ENCODE measurements at regions of chr5 and their contacts with region 1.

Region 1: GRCh38 chr5:35852084-35852734 is 4.5 kb upstream of the IL7R start:
- DNase-seq: peak in 5 of 9 experiments; percentile 30 to 83 (median 42)
- ATAC-seq: no peak
- H3K4me3 ChIP-seq: peak overlapping the region; percentile 32 to 47
- H3K4me3 Mint-ChIP-seq: peak overlapping the region; percentile 88
- H3K27ac ChIP-seq: peak overlapping the region; percentile 94 to 97
- H3K27ac Mint-ChIP-seq: peak overlapping the region; percentile 100
- H3K4me1 ChIP-seq: peaks cover 64% of the 10 kb centered on the region
- H3K4me1 Mint-ChIP-seq: peaks cover 80% of the 10 kb centered on the region
- H3K27me3 ChIP-seq: no peaks in the 10 kb centered on the region
- H3K27me3 Mint-ChIP-seq: no peaks in the 10 kb centered on the region
- CTCF ChIP-seq: no peak

Region 2: DNA sequence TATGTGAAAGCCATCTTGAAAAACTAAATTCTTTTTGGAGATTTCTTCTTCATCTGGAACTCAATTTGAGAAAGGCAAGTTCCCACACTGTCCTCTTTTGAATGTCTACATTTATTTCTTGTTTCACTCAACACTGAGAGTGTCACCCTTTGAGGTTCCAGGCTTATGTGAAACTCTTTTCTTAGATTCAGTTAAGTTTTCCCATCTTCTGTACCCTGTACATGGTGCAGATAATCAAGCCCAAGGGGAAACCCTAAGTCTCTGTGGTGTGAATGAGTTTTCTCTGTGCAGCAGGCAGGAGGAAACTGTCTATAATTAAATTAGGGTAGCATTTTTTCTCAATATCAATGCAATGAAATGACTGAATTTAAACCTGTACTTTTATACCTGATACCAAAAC is 549.7 kb before region 1 on chr5:
- CTCF ChIA-PET with region 1: no interaction called
- POLR2A ChIA-PET with region 1: no interaction called
- intact Hi-C with region 1: no loop called
- DNase-seq: no peak
- ATAC-seq: no peak
- H3K4me3 ChIP-seq: no peak overlapping the region
- H3K4me3 Mint-ChIP-seq: no peak overlapping the region
- H3K27ac ChIP-seq: no peak overlapping the region
- H3K27ac Mint-ChIP-seq: no peak overlapping the region
- H3K4me1 ChIP-seq: no peaks in the 10 kb centered on the region
- H3K4me1 Mint-ChIP-seq: no peaks in the 10 kb centered on the region
- H3K27me3 ChIP-seq: no peaks in the 10 kb centered on the region
- H3K27me3 Mint-ChIP-seq: peaks cover 16% of the 10 kb centered on the region
- CTCF ChIP-seq: no peak

Region 3: GRCh38 chr5:35513612-35514011 is 338.6 kb before region 1 on chr5:
- CTCF ChIA-PET with region 1: no interaction called
- POLR2A ChIA-PET with region 1: no interaction called
- intact Hi-C with region 1: no loop called
- DNase-seq: no peak
- ATAC-seq: no peak
- H3K4me3 ChIP-seq: no peak overlapping the region
- H3K4me3 Mint-ChIP-seq: no peak overlapping the region
- H3K27ac ChIP-seq: no peak overlapping the region
- H3K27ac Mint-ChIP-seq: no peak overlapping the region
- H3K4me1 ChIP-seq: no peaks in the 10 kb centered on the region
- H3K4me1 Mint-ChIP-seq: no peaks in the 10 kb centered on the region
- H3K27me3 ChIP-seq: no peaks in the 10 kb centered on the region
- H3K27me3 Mint-ChIP-seq: peaks cover 7% of the 10 kb centered on the region
- CTCF ChIP-seq: no peak

Region 4: GRCh38 chr5:35617435-35618303 is 234.5 kb before region 1 on chr5 and contains the start of gene SPEF2:
- CTCF ChIA-PET with region 1: no interaction called
- POLR2A ChIA-PET with region 1: interaction called, 4 read pairs
- intact Hi-C with region 1: loop called in 1 of 2 experiments (anchors 5 kb)
- DNase-seq: peak; percentile 54 to 90 (median 80)
- ATAC-seq: peak; percentile 84
- H3K4me3 ChIP-seq: peak within 1 kb of the TSS; percentile 84 to 88
- H3K4me3 Mint-ChIP-seq: peak within 1 kb of the TSS; percentile 91
- H3K27ac ChIP-seq: peak within 1 kb of the TSS; percentile 60 to 63
- H3K27ac Mint-ChIP-seq: peak within 1 kb of the TSS; percentile 95
- H3K4me1 ChIP-seq: peaks cover 16% of the 10 kb centered on the region
- H3K4me1 Mint-ChIP-seq: peaks cover 31% of the 10 kb centered on the region
- H3K27me3 ChIP-seq: no peaks in the 10 kb centered on the region
- H3K27me3 Mint-ChIP-seq: no peaks in the 10 kb centered on the region
- CTCF ChIP-seq: peak; percentile 78
- total RNA-seq, gene SPEF2: 3.5 to 4.7 TPM

Region 5: GRCh38 chr5:35785601-35786085 is 66.6 kb before region 1 on chr5:
- CTCF ChIA-PET with region 1: interaction called, 144 read pairs
- POLR2A ChIA-PET with region 1: interaction called, 192 read pairs
- intact Hi-C with region 1: no loop called
- DNase-seq: peak in 4 of 9 experiments; percentile 25 to 61 (median 35)
- ATAC-seq: peak; percentile 69
- H3K4me3 ChIP-seq: no peak overlapping the region
- H3K4me3 Mint-ChIP-seq: peak overlapping the region; percentile 6
- H3K27ac ChIP-seq: no peak overlapping the region
- H3K27ac Mint-ChIP-seq: peak overlapping the region; percentile 69
- H3K4me1 ChIP-seq: peaks cover 56% of the 10 kb centered on the region
- H3K4me1 Mint-ChIP-seq: peaks cover 80% of the 10 kb centered on the region
- H3K27me3 ChIP-seq: no peaks in the 10 kb centered on the region
- H3K27me3 Mint-ChIP-seq: no peaks in the 10 kb centered on the region
- CTCF ChIP-seq: no peak

Region 6: DNA sequence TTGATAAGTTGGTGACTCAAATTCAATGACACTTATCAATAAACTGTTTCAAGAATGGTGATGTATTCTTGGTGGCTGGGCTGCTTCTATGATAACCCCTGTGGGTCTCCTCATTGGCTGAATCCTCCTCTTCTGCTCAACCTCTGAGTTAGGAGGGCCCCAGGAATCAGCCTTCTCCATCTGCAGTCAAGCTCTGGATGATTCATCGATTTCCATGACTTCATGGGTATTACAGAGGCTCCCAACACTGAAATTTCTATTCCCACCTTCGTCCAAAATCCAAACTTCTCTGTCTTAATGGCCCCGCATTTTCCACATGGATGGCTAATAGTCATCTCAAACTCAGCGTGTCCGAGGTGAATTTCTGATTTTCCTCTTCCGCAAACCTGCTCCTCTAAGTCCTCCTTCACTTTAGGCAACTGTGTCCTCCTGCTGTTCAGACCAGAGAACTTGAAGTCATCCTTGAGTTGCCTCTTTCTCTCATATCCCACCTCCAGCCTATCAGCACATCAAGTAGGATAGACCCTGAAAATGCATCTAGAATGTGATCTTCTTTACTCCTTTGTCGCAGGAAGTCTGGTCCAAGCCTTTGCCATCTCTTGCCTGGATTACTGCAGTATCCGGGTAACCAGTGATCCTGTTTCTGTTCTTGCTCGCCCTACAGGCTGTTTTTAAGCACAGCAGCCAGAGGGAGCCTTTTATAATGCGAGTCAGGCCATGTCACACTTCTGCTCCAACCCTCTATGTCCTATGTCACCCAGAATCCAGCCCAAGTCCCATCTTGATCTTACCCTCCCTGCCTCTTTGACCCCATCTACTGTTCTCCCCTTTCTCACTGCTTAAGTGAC is 36.9 kb before region 1 on chr5:
- CTCF ChIA-PET with region 1: interaction called, 94 read pairs
- POLR2A ChIA-PET with region 1: interaction called, 700 read pairs
- intact Hi-C with region 1: loop called (anchors 1 kb)
- DNase-seq: peak in 3 of 9 experiments; percentile 30 to 62 (median 52)
- ATAC-seq: no peak
- H3K4me3 ChIP-seq: no peak overlapping the region
- H3K4me3 Mint-ChIP-seq: no peak overlapping the region
- H3K27ac ChIP-seq: peak overlapping the region in 1 of 2 experiments; percentile 15
- H3K27ac Mint-ChIP-seq: no peak overlapping the region
- H3K4me1 ChIP-seq: peaks cover 69% of the 10 kb centered on the region
- H3K4me1 Mint-ChIP-seq: peaks cover 53% of the 10 kb centered on the region
- H3K27me3 ChIP-seq: no peaks in the 10 kb centered on the region
- H3K27me3 Mint-ChIP-seq: no peaks in the 10 kb centered on the region
- CTCF ChIP-seq: peak; percentile 31

Region 7: GRCh38 chr5:35830587-35830986 is 21.6 kb before region 1 on chr5:
- CTCF ChIA-PET with region 1: interaction called, 94 read pairs
- POLR2A ChIA-PET with region 1: interaction called, 700 read pairs
- intact Hi-C with region 1: loop called in 1 of 2 experiments (anchors 1 kb)
- DNase-seq: peak in 4 of 9 experiments; percentile 22 to 82 (median 72)
- ATAC-seq: peak; percentile 78
- H3K4me3 ChIP-seq: no peak overlapping the region
- H3K4me3 Mint-ChIP-seq: peak overlapping the region; percentile 63
- H3K27ac ChIP-seq: peak overlapping the region; percentile 1 to 43
- H3K27ac Mint-ChIP-seq: peak overlapping the region; percentile 90
- H3K4me1 ChIP-seq: peaks cover 86% of the 10 kb centered on the region
- H3K4me1 Mint-ChIP-seq: peaks cover 91% of the 10 kb centered on the region
- H3K27me3 ChIP-seq: no peaks in the 10 kb centered on the region
- H3K27me3 Mint-ChIP-seq: no peaks in the 10 kb centered on the region
- CTCF ChIP-seq: no peak

Region 8: GRCh38 chr5:35863159-35863558 is 10.9 kb after region 1 on chr5:
- CTCF ChIA-PET with region 1: interaction called, 6 read pairs
- POLR2A ChIA-PET with region 1: interaction called, 26 read pairs
- intact Hi-C with region 1: loop called in 1 of 2 experiments (anchors 1 kb)
- DNase-seq: peak in 1 of 9 experiments; percentile 22
- ATAC-seq: no peak
- H3K4me3 ChIP-seq: peak overlapping the region; percentile 66 to 80
- H3K4me3 Mint-ChIP-seq: peak overlapping the region; percentile 91
- H3K27ac ChIP-seq: peak overlapping the region; percentile 59 to 97
- H3K27ac Mint-ChIP-seq: peak overlapping the region; percentile 96
- H3K4me1 ChIP-seq: peaks cover 52% of the 10 kb centered on the region
- H3K4me1 Mint-ChIP-seq: peaks cover 76% of the 10 kb centered on the region
- H3K27me3 ChIP-seq: no peaks in the 10 kb centered on the region
- H3K27me3 Mint-ChIP-seq: no peaks in the 10 kb centered on the region
- CTCF ChIP-seq: no peak

Region 9: DNA sequence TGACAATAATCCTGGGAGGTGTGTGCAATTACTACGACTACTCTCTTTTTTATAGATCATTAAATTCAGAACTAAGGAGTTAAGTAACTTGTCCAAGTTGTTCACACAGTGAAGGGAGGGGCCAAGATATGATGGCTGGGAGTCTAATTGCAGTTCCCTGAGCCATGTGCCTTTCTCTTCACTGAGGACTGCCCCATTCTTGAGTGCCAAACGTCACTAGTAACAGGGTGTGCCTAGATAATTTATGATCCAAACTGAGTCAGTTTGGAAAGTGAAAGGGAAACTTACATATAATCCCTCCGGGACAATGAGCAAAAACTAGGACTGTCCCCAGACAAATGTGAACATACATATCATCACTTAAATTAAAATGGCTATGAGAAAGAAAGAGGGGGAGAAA is 24.7 kb after region 1 on chr5:
- CTCF ChIA-PET with region 1: interaction called, 6 read pairs
- POLR2A ChIA-PET with region 1: interaction called, 75 read pairs
- intact Hi-C with region 1: no loop called
- DNase-seq: peak in 1 of 9 experiments; percentile 33
- ATAC-seq: no peak
- H3K4me3 ChIP-seq: no peak overlapping the region
- H3K4me3 Mint-ChIP-seq: peak overlapping the region; percentile 46
- H3K27ac ChIP-seq: peak overlapping the region in 1 of 2 experiments; percentile 23
- H3K27ac Mint-ChIP-seq: peak overlapping the region; percentile 87
- H3K4me1 ChIP-seq: peaks cover 65% of the 10 kb centered on the region
- H3K4me1 Mint-ChIP-seq: peaks cover 87% of the 10 kb centered on the region
- H3K27me3 ChIP-seq: no peaks in the 10 kb centered on the region
- H3K27me3 Mint-ChIP-seq: no peaks in the 10 kb centered on the region
- CTCF ChIP-seq: no peak

Measured in CD8-positive, alpha-beta T cell (primary cell).